T-cell (primary cell): ENCODE measurements at regions of chr7 and their contacts with region 1.

Region 1: DNA sequence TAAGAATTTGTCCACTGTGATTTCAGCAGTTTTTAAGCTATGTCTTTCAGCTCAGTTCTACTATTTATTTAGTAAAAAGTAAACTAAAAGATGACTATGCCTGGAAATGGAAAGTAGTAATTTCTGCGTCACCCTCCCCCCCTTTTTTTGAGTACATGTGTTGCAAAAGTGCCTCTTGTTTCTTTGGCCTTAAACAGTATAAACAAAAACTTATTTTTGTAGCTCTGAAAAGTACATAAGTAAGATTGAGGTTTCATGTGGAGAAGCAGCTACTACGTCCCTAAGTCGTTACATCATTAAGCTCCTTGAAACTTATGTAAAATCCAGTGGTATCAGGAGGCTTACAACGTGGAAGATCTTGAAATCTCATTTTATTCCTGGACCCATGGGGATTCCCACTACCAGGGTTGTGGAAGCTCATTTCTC is 46.3 kb upstream of the HBP1 start:
- DNase-seq: no peak
- ATAC-seq: no peak
- H3K4me3 ChIP-seq: no peak overlapping the region
- H3K4me3 Mint-ChIP-seq: no peak overlapping the region
- H3K27ac ChIP-seq: no peak overlapping the region
- H3K27ac Mint-ChIP-seq: no peak overlapping the region
- H3K4me1 ChIP-seq: peaks cover 9 to 14% of the 10 kb centered on the region in 2 experiments
- H3K4me1 Mint-ChIP-seq: peaks cover 17 to 23% (median 20%) of the 10 kb centered on the region in 3 donors
- H3K27me3 ChIP-seq: no peaks in the 10 kb centered on the region
- H3K27me3 Mint-ChIP-seq: peaks cover 0 to 5% of the 10 kb centered on the region in 2 donors

Region 2: GRCh38 chr7:106588422-106589198 is 533.9 kb before region 1 on chr7:
- CTCF ChIA-PET with region 1: no interaction called
- POLR2A ChIA-PET with region 1: no interaction called
- DNase-seq: no peak
- ATAC-seq: no peak
- H3K4me3 ChIP-seq: no peak overlapping the region
- H3K4me3 Mint-ChIP-seq: no peak overlapping the region
- H3K27ac ChIP-seq: no peak overlapping the region
- H3K27ac Mint-ChIP-seq: no peak overlapping the region
- H3K4me1 ChIP-seq: no peaks in the 10 kb centered on the region
- H3K4me1 Mint-ChIP-seq: no peaks in the 10 kb centered on the region
- H3K27me3 ChIP-seq: no peaks in the 10 kb centered on the region
- H3K27me3 Mint-ChIP-seq: peaks cover 10 to 22% of the 10 kb centered on the region in 2 donors

Region 3: DNA sequence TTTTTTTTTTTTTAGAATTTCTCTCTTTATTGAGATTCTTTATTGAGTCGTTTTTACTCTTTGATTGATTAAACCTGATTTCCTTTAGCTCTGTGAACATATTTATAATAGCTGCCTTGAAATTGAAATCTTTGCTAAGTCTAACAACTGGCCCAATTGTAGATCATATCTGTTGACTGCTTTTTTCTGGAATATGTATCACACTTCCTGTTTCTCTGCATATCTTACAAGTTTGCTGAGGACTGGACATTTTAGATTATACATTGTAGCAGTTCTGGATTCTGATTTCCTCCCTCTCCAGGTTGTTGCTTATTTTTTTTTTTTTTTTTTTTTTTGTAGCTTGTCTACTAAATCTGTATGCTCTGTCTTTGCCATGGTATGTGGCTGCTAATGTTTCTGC is 21.7 kb before region 1 on chr7:
- CTCF ChIA-PET with region 1: interaction called in 1 of 2 experiments, 3 read pairs
- POLR2A ChIA-PET with region 1: interaction called in 1 of 2 experiments, 12 read pairs
- DNase-seq: no peak
- ATAC-seq: no peak
- H3K4me3 ChIP-seq: no peak overlapping the region
- H3K4me3 Mint-ChIP-seq: no peak overlapping the region
- H3K27ac ChIP-seq: no peak overlapping the region
- H3K27ac Mint-ChIP-seq: no peak overlapping the region
- H3K4me1 ChIP-seq: peaks cover 2% of the 10 kb centered on the region in 2 experiments
- H3K4me1 Mint-ChIP-seq: peaks cover 3 to 6% (median 4%) of the 10 kb centered on the region in 3 donors
- H3K27me3 ChIP-seq: peaks cover 0 to 3% of the 10 kb centered on the region in 2 experiments
- H3K27me3 Mint-ChIP-seq: peaks cover 10 to 27% of the 10 kb centered on the region in 2 donors

Region 4: DNA sequence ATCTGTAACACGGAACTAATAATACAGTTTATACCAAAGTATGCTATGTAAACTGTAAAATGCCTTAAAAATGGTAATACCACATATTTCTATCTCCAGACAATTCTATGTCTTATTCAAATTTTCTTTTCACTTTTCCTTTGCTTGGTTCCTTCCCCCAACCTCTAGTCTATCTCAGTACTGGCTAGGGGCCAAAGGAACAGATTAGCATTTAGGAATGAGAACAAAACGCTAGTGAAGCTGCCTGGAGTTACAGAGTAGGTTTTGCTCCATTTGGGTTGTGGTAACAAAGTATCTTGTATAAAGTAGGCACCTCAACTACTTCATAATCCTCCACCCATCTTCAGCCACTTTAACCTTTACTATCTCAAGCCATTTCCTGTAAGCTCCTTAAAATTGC is 140.4 kb after region 1 on chr7:
- CTCF ChIA-PET with region 1: no interaction called
- POLR2A ChIA-PET with region 1: no interaction called
- DNase-seq: no peak
- ATAC-seq: no peak
- H3K4me3 ChIP-seq: no peak overlapping the region
- H3K4me3 Mint-ChIP-seq: no peak overlapping the region
- H3K27ac ChIP-seq: no peak overlapping the region
- H3K27ac Mint-ChIP-seq: no peak overlapping the region
- H3K4me1 ChIP-seq: no peaks in the 10 kb centered on the region
- H3K4me1 Mint-ChIP-seq: no peaks in the 10 kb centered on the region
- H3K27me3 ChIP-seq: no peaks in the 10 kb centered on the region
- H3K27me3 Mint-ChIP-seq: no peaks in the 10 kb centered on the region